Activated CD4-positive, alpha-beta T cell treated with anti-CD3 and anti-CD28 coated beads for 36 hours (primary cell): ENCODE measurements at regions of chrX and their contacts with region 1.

Region 1: DNA sequence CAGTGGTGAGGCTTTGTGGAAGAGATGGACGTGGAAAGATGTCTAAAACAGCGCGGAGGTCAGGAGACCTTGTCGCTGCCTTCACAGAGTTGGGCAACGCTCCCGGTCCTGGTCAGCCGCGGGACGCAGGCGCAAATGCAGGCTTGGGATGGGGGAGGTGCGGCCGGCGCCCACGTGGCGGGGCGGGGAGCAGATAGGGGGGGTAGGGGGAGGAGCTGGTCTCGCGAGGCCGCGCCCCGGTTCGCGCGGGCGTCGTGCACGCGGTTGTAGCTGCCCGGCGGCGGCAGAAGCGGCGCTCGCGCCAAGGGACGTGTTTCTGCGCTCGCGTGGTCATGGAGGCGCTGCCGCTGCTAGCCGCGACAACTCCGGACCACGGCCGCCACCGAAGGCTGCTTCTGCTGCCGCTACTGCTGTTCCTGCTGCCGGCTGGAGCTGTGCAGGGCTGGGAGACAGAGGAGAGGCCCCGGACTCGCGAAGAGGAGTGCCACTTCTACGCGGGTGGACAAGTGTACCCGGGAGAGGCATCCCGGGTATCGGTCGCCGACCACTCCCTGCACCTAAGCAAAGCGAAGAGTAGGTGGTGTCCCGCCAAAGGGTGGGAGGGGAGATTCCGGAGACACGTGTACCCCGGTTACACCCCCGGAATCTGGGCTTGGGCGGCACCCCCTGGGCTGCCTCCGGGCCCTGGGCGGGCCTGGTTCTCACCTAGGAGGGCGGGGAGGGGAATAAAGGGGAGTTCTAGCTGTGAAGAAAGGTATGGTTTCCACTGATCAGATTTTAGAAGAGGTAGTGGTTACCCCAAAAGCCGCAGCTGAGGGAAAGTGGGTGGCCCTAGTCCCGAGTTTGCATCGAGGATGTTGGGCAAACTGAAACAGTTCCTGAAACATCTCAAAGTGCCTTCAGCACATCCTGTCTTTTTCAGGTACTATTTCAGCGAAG is at the start of gene PRDX4:
- DNase-seq: peak; percentile 90
- ATAC-seq: peak; percentile 67
- H3K4me3 Mint-ChIP-seq: peak within 1 kb of the TSS; percentile 83
- H3K27ac Mint-ChIP-seq: peak within 1 kb of the TSS; percentile 92
- H3K4me1 Mint-ChIP-seq: peaks cover 35% of the 10 kb centered on the region
- H3K27me3 Mint-ChIP-seq: no peaks in the 10 kb centered on the region
- total RNA-seq, gene PRDX4: 48.8 to 51.5 TPM

Region 2: GRCh38 chrX:23637187-23637586 is 30.3 kb before region 1 on chrX:
- CTCF ChIA-PET with region 1: interaction called, 9 read pairs
- POLR2A ChIA-PET with region 1: no interaction called
- intact Hi-C with region 1: loop called in 1 of 2 experiments (anchors 2 kb)
- DNase-seq: peak; percentile 80
- ATAC-seq: peak; percentile 98
- H3K4me3 Mint-ChIP-seq: no peak overlapping the region
- H3K27ac Mint-ChIP-seq: no peak overlapping the region
- H3K4me1 Mint-ChIP-seq: no peaks in the 10 kb centered on the region
- H3K27me3 Mint-ChIP-seq: peaks cover 2% of the 10 kb centered on the region

Region 3: DNA sequence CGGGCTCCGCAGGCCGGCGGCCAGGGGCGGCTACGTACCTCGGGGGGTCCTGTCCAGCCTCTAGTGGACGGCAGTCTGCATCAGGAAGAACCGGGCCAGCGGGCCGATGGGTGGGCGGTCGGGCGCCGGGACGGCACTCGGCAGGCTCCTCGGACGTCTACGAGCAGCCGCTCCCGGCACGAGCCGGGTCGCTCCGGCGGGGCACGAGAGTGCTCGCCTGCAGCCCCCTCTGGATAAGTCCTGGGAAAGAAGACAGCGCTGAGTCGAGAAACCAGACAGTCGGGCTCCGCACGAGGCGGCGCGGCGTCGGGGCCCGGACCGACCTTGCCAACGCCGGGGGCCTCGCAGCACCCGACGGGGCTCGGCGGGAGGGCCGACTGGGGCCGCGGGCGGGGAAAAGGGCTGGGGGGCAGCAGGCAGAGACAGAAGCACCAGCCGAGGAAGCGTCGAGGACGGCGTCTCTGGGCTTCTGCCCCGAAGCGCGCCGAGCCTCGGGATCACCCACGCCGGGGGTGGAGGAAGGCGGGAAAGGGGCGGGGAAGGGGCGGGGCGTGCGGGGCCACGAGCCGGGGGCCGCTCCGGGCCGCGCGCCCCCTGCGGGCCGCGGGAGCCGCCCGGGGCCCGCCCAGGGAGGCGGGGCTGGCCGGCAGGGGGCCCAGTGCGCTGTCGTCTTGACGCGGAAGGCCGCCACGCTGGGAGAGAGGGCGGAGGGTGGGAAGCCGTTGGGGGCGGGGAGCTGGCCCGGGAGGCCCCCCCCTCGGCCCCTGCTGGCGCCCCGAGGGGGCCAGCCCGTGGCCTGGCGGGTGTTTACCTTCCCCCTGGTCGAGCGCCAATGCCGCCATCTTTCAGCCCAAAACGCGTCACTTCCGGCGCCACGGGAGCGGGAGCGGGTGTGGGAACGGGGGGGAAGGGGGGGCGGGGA is 357.6 kb after region 1 on chrX:
- CTCF ChIA-PET with region 1: no interaction called
- POLR2A ChIA-PET with region 1: no interaction called
- intact Hi-C with region 1: loop called (anchors 2 to 10 kb)
- DNase-seq: peak; percentile 91
- ATAC-seq: peak; percentile 89
- H3K4me3 Mint-ChIP-seq: peak overlapping the region; percentile 83
- H3K27ac Mint-ChIP-seq: peak overlapping the region; percentile 58
- H3K4me1 Mint-ChIP-seq: peaks cover 19% of the 10 kb centered on the region
- H3K27me3 Mint-ChIP-seq: no peaks in the 10 kb centered on the region

Region 4: DNA sequence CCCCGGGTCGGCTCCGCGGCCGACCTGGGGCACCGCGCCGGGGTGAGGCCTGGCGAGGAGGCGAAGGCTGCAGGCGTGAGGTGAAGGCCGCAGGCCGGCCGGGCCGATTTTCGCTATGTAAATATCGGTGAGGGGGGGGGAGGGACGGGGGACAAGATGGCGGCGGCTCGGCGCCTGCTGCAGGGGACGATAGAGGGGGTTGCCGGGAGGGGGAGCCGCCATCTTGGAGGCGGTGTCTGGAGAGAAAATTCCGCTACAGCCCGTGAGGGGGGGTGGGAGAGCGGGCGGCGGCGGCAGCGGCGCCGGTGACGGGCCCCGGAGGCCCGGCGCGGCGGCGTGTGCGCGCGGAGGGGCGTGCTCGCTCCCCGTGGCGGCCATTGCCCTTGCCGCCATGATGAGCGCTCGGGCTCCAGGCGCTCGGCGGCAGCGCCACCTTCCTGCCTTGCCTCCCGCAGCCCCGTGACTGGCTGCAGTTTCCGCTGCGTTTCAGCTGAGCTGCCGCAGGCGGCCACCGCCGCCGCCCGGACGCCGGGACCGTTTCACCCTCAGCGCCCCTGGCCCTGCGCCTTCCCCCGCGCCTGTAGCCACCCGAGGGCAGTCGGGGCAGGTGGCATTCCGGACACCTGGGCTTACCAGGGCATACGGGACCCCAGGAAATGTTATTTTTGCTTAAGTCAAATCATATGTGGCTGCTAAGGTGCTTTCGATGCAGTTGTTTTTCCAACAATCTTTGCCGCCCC is 482.7 kb after region 1 on chrX:
- CTCF ChIA-PET with region 1: no interaction called
- POLR2A ChIA-PET with region 1: no interaction called
- intact Hi-C with region 1: loop called in 1 of 2 experiments (anchors 5 kb)
- DNase-seq: peak; percentile 92
- ATAC-seq: peak; percentile 81
- H3K4me3 Mint-ChIP-seq: peak overlapping the region; percentile 93
- H3K27ac Mint-ChIP-seq: peak overlapping the region; percentile 97
- H3K4me1 Mint-ChIP-seq: peaks cover 50% of the 10 kb centered on the region
- H3K27me3 Mint-ChIP-seq: no peaks in the 10 kb centered on the region

Region 5: GRCh38 chrX:24682739-24683432 is 1015.4 kb after region 1 on chrX:
- CTCF ChIA-PET with region 1: no interaction called
- POLR2A ChIA-PET with region 1: no interaction called
- intact Hi-C with region 1: loop called in 1 of 2 experiments (anchors 10 kb)
- DNase-seq: peak; percentile 64
- ATAC-seq: peak; percentile 99
- H3K4me3 Mint-ChIP-seq: no peak overlapping the region
- H3K27ac Mint-ChIP-seq: peak overlapping the region; percentile 61
- H3K4me1 Mint-ChIP-seq: peaks cover 21% of the 10 kb centered on the region
- H3K27me3 Mint-ChIP-seq: peaks cover 5% of the 10 kb centered on the region